ENCODE measurements at regions of chr5 and their contacts with region 1.

Region 1: GRCh38 chr5:40879163-40879942 is 29.9 kb upstream of the C7 start:
- DNase-seq: no peak
- H3K4me3 Mint-ChIP-seq: no peak overlapping the region
- H3K27ac Mint-ChIP-seq: no peak overlapping the region
- H3K4me1 Mint-ChIP-seq: peaks cover 3% of the 10 kb centered on the region
- H3K27me3 Mint-ChIP-seq: peaks cover 13% of the 10 kb centered on the region

Region 2: DNA sequence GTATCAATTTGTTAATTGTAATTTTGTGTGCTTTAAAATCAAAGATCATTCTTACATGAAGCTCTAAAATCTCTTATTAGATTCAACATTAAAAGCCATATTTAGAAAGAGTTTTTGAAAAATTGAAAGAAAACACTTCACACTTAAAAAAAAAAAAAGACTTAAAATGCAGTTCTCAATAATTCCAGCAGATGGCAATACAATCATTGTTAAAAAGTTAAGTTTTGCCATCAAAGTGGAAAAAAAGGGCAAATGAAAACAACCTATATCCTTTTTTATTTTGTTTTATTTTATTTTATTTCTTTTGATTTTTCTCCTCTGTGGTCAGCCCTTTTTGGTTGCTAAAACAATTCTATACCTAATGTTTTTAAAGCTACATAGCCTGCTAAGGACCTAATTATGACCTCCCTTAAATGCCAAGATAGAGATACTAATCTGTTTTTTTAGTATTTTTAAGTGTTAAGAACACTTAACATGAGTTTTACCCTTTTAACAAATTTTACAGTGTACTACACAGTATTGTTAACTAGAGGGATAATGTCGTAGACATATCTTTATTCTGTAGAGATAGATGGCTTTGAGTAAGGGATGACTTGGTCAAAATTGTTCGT is 1300.4 kb before region 1 on chr5:
- intact Hi-C with region 1: loop called (anchors 2 kb)
- DNase-seq: no peak
- H3K4me3 Mint-ChIP-seq: no peak overlapping the region
- H3K27ac Mint-ChIP-seq: no peak overlapping the region
- H3K4me1 Mint-ChIP-seq: peaks cover 6% of the 10 kb centered on the region
- H3K27me3 Mint-ChIP-seq: peaks cover 19% of the 10 kb centered on the region

Region 3: DNA sequence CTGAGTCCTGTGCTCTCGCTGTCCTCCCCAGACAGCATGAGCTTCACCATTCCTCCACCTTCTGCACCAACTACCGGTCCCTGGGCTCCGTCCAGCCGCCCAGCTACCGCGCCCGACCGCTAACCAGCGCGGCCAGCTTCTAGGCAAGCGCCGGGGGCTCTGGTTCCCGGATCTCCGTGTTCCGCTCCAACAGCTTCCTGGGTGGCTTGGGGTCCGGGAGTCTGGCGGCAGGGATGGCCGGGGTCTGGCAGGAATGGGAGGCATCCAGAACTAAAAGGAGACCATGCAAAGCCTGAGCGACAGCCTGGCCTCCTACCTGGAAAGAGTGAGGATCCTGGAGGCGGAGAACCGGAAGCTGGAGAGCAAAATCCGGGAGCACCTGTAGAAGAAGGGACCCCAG is 812.7 kb before region 1 on chr5:
- intact Hi-C with region 1: no loop called
- DNase-seq: no peak
- H3K4me3 Mint-ChIP-seq: no peak overlapping the region
- H3K27ac Mint-ChIP-seq: no peak overlapping the region
- H3K4me1 Mint-ChIP-seq: no peaks in the 10 kb centered on the region
- H3K27me3 Mint-ChIP-seq: no peaks in the 10 kb centered on the region

Region 4: DNA sequence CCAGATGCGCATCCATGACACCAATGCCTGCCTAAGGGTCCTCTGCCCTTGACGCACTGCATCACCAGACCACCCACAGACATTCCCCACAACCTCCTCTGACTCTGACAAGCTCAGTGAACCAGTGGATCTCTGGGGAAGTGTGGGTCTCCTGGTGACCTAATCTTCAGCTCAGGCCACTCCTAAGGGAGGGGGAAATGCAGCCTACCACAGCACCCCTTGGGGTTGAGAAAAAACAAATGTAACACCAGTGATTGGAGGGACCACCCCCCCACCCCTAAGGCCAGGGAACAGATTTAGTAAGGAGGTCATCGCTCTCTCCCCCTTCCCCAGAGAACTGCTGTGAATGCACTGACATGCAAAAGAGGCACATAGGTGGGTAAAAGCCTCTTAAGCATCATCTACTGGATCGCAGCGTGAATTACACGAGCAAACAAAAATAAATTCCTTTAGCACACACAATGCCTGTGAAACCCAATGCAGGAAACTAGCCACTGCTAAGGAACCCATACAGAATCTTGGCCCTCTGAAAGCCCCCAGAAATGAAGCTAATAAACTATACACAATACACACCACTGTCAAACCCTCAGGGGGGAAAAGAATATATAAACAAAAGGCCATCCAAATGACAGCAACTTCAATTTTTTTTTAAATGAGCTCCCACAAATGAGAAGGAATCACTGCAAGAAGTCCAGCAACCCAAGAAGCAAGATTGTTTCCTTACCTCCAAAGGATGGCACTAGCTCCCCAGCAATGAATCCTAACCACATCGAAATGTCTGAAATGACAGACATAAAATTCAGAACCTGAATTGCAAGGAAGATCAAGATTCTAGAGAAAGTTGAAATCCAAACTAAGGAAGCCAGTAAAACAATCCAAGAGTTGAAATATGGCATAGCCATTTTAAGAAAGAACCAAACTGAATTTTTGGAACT is 713.3 kb before region 1 on chr5:
- intact Hi-C with region 1: loop called (anchors 5 kb)
- DNase-seq: peak; percentile 63
- H3K4me3 Mint-ChIP-seq: no peak overlapping the region
- H3K27ac Mint-ChIP-seq: no peak overlapping the region
- H3K4me1 Mint-ChIP-seq: peaks cover 5% of the 10 kb centered on the region
- H3K27me3 Mint-ChIP-seq: no peaks in the 10 kb centered on the region

Region 5: GRCh38 chr5:40497573-40497972 is 381.8 kb before region 1 on chr5:
- intact Hi-C with region 1: no loop called
- DNase-seq: no peak
- H3K4me3 Mint-ChIP-seq: no peak overlapping the region
- H3K27ac Mint-ChIP-seq: no peak overlapping the region
- H3K4me1 Mint-ChIP-seq: peaks cover 15% of the 10 kb centered on the region
- H3K27me3 Mint-ChIP-seq: no peaks in the 10 kb centered on the region

Region 6: GRCh38 chr5:40717281-40717680 is 162.1 kb before region 1 on chr5:
- intact Hi-C with region 1: no loop called
- DNase-seq: no peak
- H3K4me3 Mint-ChIP-seq: no peak overlapping the region
- H3K27ac Mint-ChIP-seq: no peak overlapping the region
- H3K4me1 Mint-ChIP-seq: peaks cover 2% of the 10 kb centered on the region
- H3K27me3 Mint-ChIP-seq: no peaks in the 10 kb centered on the region

Region 7: DNA sequence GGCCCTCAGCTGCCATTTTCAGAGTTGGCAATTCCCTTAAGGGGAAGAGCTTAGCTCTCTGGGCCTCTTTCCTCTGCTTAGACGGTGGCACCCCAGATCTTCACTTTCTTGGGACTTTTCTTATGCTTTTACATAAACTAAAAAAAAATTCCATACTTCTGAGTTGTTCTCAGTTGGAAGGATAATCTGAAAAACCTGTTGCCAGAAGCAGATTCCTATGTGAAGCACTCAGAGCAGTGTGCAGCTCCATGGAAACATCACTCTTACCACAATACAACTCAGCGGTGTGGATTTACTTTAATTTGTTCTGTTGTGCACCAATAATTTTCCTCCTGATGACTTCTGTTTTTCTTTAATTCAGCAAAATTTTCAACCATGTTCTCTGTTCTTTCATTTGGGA is 235.9 kb after region 1 on chr5:
- intact Hi-C with region 1: no loop called
- DNase-seq: no peak
- H3K4me3 Mint-ChIP-seq: no peak overlapping the region
- H3K27ac Mint-ChIP-seq: no peak overlapping the region
- H3K4me1 Mint-ChIP-seq: no peaks in the 10 kb centered on the region
- H3K27me3 Mint-ChIP-seq: no peaks in the 10 kb centered on the region

Measured in activated CD4-positive, alpha-beta T cell treated with anti-CD3 and anti-CD28 coated beads, Interleukin-2, amount 10 ng/mL, durations not matched to agents 24 days and 14 days (primary cell).